ENCODE measurements at regions of chr2 and their contacts with region 1.

Region 1: DNA sequence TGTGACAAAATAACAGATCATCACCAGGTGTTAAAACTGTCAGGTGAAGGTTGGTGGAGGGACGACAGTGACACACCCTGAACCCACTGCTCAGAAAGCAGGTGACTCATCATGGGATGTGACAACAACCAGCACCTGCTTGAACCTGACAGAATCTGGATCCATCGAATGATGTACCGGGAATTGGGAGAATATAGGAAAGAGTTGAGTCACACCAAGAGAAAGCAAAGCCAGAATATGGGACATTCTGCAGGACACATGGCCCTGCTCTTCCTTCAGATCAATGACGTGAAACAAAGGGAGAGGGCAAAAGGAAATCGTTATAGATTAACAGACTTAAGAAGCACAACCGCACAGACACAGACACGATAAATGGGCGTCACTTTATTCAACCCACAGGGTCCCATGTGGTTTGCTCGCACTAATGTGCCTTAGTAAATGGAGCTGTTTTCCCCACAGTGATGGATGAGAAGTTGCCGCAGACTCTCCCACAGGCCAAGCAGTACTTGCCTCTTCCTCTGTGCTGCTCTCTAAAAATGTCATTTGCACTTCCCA is 100.1 kb downstream of the CRACDL start:
- DNase-seq: peak; percentile 50 to 83 (median 82)
- H3K4me3 ChIP-seq: no peak overlapping the region
- H3K4me3 Mint-ChIP-seq: peak overlapping the region; percentile 39 to 70 (median 61)
- H3K27ac ChIP-seq: peak overlapping the region; percentile 32
- H3K27ac Mint-ChIP-seq: peak overlapping the region; percentile 84 to 98 (median 95)
- H3K4me1 ChIP-seq: peaks cover 29% of the 10 kb centered on the region
- H3K4me1 Mint-ChIP-seq: peaks cover 50 to 62% (median 59%) of the 10 kb centered on the region in 3 donors
- H3K27me3 ChIP-seq: no peaks in the 10 kb centered on the region
- H3K27me3 Mint-ChIP-seq: peaks cover 0 to 3% of the 10 kb centered on the region in 2 donors

Region 2: DNA sequence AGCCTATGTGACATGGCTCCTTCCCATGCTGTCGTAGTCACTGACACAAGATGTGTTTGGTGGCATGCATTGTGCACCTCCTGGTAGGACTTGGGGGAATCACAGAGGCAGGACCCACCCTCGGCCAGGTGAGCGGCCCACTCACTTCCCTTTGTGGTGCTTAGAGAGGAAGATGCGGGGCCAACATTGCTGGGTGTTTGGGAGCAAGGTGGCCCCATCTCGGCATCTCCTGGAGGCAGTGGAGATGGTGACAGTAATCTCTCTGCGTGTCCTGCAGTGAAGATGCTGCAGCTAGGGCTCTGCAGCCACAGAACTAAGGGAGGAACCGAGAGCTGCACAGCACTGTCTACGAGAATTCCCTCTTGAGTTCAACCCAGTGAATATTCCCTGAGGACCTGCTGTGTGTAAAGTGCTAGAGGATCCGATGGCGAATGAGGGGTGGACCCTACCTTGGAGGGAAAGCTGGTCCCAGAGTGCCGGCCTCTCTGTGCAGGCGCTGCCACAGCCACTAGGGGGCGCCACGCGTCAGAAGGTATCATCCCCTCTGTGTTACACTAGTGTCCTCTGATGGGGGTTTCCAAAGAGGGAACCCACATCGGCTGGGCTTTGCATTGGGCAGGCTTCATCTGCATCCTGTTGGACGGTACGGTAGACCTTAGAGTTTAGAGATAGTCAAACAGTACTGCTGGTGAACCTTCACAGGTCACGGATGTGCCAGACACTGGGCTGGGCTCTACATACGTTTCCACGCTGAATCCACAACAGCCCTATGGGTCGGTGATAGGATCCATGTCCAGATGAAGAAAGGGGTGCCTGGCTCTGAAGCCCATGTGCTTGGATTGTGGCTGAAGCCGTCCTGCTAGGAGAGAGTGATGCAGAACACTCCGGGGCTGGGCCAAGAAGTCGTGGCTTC is 266.8 kb before region 1 on chr2:
- CTCF ChIA-PET with region 1: interaction called, 15 read pairs
- POLR2A ChIA-PET with region 1: interaction called, 4 read pairs
- DNase-seq: peak; percentile 45 to 74 (median 61)
- H3K4me3 ChIP-seq: no peak overlapping the region
- H3K4me3 Mint-ChIP-seq: no peak overlapping the region
- H3K27ac ChIP-seq: no peak overlapping the region
- H3K27ac Mint-ChIP-seq: peak overlapping the region in 7 of 8 donors; percentile 10 to 95 (median 79)
- H3K4me1 ChIP-seq: no peaks in the 10 kb centered on the region
- H3K4me1 Mint-ChIP-seq: no peaks in the 10 kb centered on the region
- H3K27me3 ChIP-seq: no peaks in the 10 kb centered on the region
- H3K27me3 Mint-ChIP-seq: no peaks in the 10 kb centered on the region

Region 3: GRCh38 chr2:99085421-99085820 is 249.5 kb after region 1 on chr2:
- CTCF ChIA-PET with region 1: no interaction called
- POLR2A ChIA-PET with region 1: no interaction called
- DNase-seq: peak in 2 of 5 donors; percentile 5 to 46
- H3K4me3 ChIP-seq: no peak overlapping the region
- H3K4me3 Mint-ChIP-seq: no peak overlapping the region
- H3K27ac ChIP-seq: no peak overlapping the region
- H3K27ac Mint-ChIP-seq: no peak overlapping the region
- H3K4me1 ChIP-seq: peaks cover 5% of the 10 kb centered on the region
- H3K4me1 Mint-ChIP-seq: peaks cover 4 to 17% (median 10%) of the 10 kb centered on the region in 3 donors
- H3K27me3 ChIP-seq: no peaks in the 10 kb centered on the region
- H3K27me3 Mint-ChIP-seq: peaks cover 15 to 50% of the 10 kb centered on the region in 2 donors

Region 4: DNA sequence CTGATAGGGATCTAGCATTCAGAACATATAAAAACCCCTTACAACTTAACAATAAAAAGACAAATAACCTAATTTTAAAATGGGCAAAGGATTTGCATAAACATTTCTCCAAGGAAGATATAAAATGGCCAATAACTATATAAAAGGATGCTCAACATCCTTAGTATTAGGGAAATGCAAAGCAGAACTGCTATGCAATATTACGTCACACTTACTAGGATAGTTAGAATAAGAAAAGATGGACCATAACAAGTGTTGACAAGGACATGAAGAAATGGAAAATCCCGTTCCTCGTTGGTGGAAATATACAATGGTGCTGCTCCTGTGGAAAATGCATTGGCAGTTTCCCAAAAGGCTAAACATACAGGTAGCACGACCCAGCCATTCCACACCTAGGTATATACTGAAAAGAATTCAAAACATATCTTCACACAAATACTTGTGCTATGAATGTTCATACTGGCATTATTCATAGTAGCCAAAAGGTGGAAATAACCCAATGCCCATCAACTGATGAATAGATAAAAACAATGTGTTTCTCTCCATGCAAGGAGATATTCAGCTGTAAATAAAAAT is 702.1 kb after region 1 on chr2:
- CTCF ChIA-PET with region 1: no interaction called
- POLR2A ChIA-PET with region 1: no interaction called
- DNase-seq: no peak
- H3K4me3 ChIP-seq: no peak overlapping the region
- H3K4me3 Mint-ChIP-seq: no peak overlapping the region
- H3K27ac ChIP-seq: no peak overlapping the region
- H3K27ac Mint-ChIP-seq: peak overlapping the region in 1 of 8 donors; percentile 37
- H3K4me1 ChIP-seq: no peaks in the 10 kb centered on the region
- H3K4me1 Mint-ChIP-seq: no peaks in the 10 kb centered on the region
- H3K27me3 ChIP-seq: peaks cover 2% of the 10 kb centered on the region
- H3K27me3 Mint-ChIP-seq: peaks cover 12 to 26% of the 10 kb centered on the region in 2 donors